ENCODE measurements at regions of chr13 and their contacts with region 1.

Region 1: GRCh38 chr13:75864718-75865117 is 228.6 kb downstream of the LMO7 start:
- DNase-seq: no peak
- ATAC-seq: no peak

Region 2: GRCh38 chr13:75896271-75896670 is 31.6 kb after region 1 on chr13:
- intact Hi-C with region 1: no loop called
- DNase-seq: no peak
- ATAC-seq: no peak

Region 3: DNA sequence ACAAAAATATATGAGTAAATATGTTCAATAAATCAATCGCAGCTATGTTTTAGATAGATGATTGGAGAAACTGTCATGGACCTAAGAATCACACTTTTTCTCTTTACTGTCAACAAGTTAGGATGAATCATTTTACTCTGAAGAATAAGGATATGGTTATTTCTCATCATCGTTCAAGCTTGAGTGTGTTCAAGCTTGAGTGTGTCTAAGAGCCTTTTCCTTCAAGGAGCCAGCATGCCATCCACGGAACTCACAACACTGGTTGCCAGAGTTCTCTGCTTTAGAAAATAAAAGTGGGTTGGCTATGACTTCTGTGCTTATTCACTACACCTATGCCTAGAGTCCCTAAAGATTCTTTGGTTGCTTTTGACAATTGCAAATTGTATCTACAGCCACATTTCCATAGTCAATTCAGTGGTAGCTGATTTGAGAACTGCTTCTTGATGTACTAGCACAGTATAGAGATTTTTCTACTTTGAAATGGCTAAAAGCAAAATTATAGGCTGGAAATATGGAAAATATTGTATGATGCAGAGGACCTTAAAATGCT is 1612.7 kb after region 1 on chr13:
- intact Hi-C with region 1: loop called (anchors 5 kb)
- DNase-seq: no peak
- ATAC-seq: no peak